A549 (cell line): ENCODE measurements at regions of chr14 and their contacts with region 1.

Region 1: GRCh38 chr14:100108042-100108825 is 43.0 kb downstream of the EVL start:
- DNase-seq: peak; percentile 69 to 88
- ATAC-seq: peak; percentile 91 to 98
- H3K4me3 ChIP-seq: no peak overlapping the region
- H3K27ac ChIP-seq: peak overlapping the region; percentile 51 to 56; a peak in 4 of 6 replicates
- H3K4me1 ChIP-seq: peaks cover 27% of the 10 kb centered on the region
- CTCF ChIP-seq: peak; percentile 90
- EP300 ChIP-seq: no peak
- POLR2A ChIP-seq: no peak
- RAD21 ChIP-seq: peak; percentile 86 to 88

Region 2: GRCh38 chr14:99774556-99775307 is 333.5 kb before region 1 on chr14:
- CTCF ChIA-PET with region 1: no interaction called
- POLR2A ChIA-PET with region 1: no interaction called
- DNase-seq: no peak
- ATAC-seq: no peak
- H3K4me3 ChIP-seq: no peak overlapping the region
- H3K27ac ChIP-seq: no peak overlapping the region
- H3K4me1 ChIP-seq: no peaks in the 10 kb centered on the region; the same call in 2 of the 3 replicates
- CTCF ChIP-seq: no peak
- EP300 ChIP-seq: no peak
- POLR2A ChIP-seq: no peak
- RAD21 ChIP-seq: no peak

Region 3: GRCh38 chr14:99872786-99873440 is 235.3 kb before region 1 on chr14:
- CTCF ChIA-PET with region 1: no interaction called
- POLR2A ChIA-PET with region 1: no interaction called
- DNase-seq: no peak
- ATAC-seq: no peak
- H3K4me3 ChIP-seq: no peak overlapping the region
- H3K27ac ChIP-seq: no peak overlapping the region
- H3K4me1 ChIP-seq: no peaks in the 10 kb centered on the region
- CTCF ChIP-seq: no peak
- EP300 ChIP-seq: no peak
- POLR2A ChIP-seq: no peak
- RAD21 ChIP-seq: no peak

Region 4: GRCh38 chr14:100015251-100015655 is 93.0 kb before region 1 on chr14:
- CTCF ChIA-PET with region 1: interaction called, 22 read pairs
- POLR2A ChIA-PET with region 1: no interaction called
- DNase-seq: no peak
- ATAC-seq: no peak
- H3K4me3 ChIP-seq: no peak overlapping the region
- H3K27ac ChIP-seq: no peak overlapping the region
- H3K4me1 ChIP-seq: peaks cover 31% of the 10 kb centered on the region
- CTCF ChIP-seq: no peak
- EP300 ChIP-seq: no peak
- POLR2A ChIP-seq: no peak
- RAD21 ChIP-seq: no peak

Region 5: GRCh38 chr14:100037353-100037752 is 70.9 kb before region 1 on chr14:
- CTCF ChIA-PET with region 1: interaction called, 25 read pairs
- POLR2A ChIA-PET with region 1: no interaction called
- DNase-seq: no peak
- ATAC-seq: no peak
- H3K4me3 ChIP-seq: no peak overlapping the region
- H3K27ac ChIP-seq: peak overlapping the region in 1 of 2 experiments; percentile 13; a peak in 2 of 6 replicates
- H3K4me1 ChIP-seq: peaks cover 34% of the 10 kb centered on the region
- CTCF ChIP-seq: no peak
- EP300 ChIP-seq: no peak
- POLR2A ChIP-seq: no peak
- RAD21 ChIP-seq: no peak

Region 6: GRCh38 chr14:100065111-100065871 is 42.9 kb before region 1 on chr14 and contains the start of gene EVL:
- CTCF ChIA-PET with region 1: interaction called, 17 read pairs
- POLR2A ChIA-PET with region 1: no interaction called
- DNase-seq: no peak
- ATAC-seq: no peak
- H3K4me3 ChIP-seq: no peak within 1 kb of the TSS
- H3K27ac ChIP-seq: no peak within 1 kb of the TSS
- H3K4me1 ChIP-seq: peaks cover 7% of the 10 kb centered on the region; the same call in 1 of the 3 replicates
- CTCF ChIP-seq: no peak
- EP300 ChIP-seq: no peak
- POLR2A ChIP-seq: no peak
- RAD21 ChIP-seq: no peak
- polyA plus RNA-seq, gene EVL: 14.8 and 17.0 TPM in 2 replicates

Region 7: DNA sequence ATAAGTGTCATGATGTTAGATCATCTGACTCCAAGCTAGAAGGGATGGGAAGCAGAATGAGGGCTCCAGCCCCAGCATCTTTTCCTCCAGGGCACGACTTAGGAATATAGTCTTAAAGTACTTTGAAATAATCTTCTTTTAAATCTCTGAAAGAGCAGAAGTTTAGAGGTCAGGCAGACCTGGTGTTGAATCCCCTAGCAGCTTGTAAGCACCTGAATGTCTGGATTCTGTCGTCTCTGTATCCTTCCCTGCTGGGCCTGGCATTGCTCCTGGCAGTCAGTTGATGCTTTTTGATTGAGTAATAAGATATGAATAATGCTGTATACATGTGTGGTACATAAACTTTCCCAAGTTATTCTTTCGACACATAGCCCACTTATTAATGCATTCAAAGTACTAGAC is 11.7 kb before region 1 on chr14:
- CTCF ChIA-PET with region 1: interaction called, 104 read pairs
- POLR2A ChIA-PET with region 1: no interaction called
- DNase-seq: no peak
- ATAC-seq: peak; percentile 77 to 84
- H3K4me3 ChIP-seq: no peak overlapping the region
- H3K27ac ChIP-seq: peak overlapping the region; percentile 26 to 36; a peak in 4 of 6 replicates
- H3K4me1 ChIP-seq: peaks cover 14% of the 10 kb centered on the region
- CTCF ChIP-seq: no peak
- EP300 ChIP-seq: no peak
- POLR2A ChIP-seq: no peak
- RAD21 ChIP-seq: no peak